Sciatic nerve (tissue), 2 donors: ENCODE measurements at regions of chr14 and their contacts with region 1.

Region 1: DNA sequence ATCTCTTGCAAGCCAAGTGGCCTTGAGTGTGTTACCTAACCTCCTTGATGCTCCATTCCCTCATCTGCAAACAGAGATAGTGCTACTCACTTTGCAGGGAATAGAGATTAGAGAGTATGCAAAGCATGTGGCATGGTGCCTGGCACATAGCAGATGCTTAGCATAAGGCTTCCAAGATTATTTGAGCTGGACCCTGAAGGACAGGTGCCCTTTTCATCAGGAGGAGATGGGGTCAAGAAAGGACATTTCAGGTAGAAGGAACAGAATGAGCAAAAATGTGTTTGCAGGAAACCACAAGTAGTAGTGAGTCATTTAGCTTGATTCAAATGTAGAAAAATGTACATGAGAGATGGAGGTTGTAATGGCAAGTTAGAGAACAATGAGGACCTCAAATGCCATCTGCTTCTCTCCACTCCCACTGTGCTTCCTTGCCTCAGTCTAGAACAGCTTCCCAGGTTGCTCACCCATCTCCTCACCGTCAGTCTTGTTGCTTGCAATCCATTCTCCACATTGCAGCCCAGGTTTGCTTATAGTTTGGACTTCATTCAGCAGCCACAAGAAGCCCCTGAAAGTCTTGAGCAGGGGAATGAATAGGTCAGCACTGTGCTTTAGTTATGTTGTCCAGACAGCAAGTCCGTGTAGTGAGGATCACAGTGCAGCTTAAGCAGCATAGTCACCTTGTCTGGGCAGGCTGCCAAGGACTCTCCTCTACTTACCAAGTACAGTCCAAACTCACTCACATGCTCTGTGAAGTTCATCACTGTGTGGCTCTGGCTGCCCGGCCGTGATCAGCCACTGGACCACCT is 536.3 kb upstream of the CCDC196 start:
- DNase-seq: no peak
- ATAC-seq: no peak

Region 2: GRCh38 chr14:65565948-65566347 is 384.0 kb before region 1 on chr14:
- intact Hi-C with region 1: no loop called
- DNase-seq: no peak
- ATAC-seq: no peak

Region 3: DNA sequence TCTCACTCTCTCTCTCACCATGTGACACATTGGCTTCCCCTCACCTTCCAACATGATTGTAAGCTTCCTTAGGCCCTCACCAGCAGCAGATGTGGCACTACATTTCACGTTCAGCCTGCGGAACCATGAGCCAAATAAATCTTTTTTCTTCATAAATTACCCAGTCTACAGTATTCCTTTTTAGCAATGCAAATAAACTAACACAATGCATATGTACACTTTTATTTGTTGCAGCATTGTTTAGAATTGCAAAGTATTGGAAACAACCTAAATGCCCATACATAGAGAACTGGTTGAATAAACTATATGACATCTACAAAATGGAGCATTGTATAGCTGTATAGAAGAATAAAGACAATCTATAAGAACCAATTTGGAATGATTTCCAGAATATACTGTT is 49.8 kb before region 1 on chr14:
- intact Hi-C with region 1: no loop called
- DNase-seq: no peak
- ATAC-seq: no peak

Region 4: DNA sequence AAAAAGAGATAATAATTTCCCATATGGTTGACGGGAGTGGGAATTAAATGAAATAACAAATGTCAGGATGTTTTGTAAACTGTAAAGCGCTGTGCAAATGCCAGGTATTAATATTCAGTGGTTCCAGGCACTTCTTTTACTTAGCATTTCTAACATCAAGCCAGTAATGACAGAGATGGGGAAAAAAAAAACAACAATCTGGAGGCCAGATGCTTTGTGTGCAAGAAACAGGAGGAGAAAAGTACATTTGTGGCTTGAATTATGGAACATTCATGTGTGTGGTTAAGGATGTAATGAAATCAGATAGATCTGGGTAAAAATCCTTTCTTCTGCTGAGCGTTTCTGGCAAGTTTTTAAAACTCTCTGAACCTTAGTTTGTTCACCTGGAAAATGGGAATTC is 27.8 kb before region 1 on chr14:
- intact Hi-C with region 1: no loop called
- DNase-seq: no peak
- ATAC-seq: no peak

Region 5: GRCh38 chr14:66273261-66273832 is 323.4 kb after region 1 on chr14:
- intact Hi-C with region 1: loop called (anchors 5 kb)
- DNase-seq: no peak
- ATAC-seq: no peak